ENCODE measurements at regions of chr3 and their contacts with region 1.

Region 1: GRCh38 chr3:98022978-98023820 is 11.9 kb downstream of the GABRR3 start:
- DNase-seq: peak; percentile 66
- H3K4me3 ChIP-seq: no peak overlapping the region
- H3K27ac ChIP-seq: no peak overlapping the region
- H3K4me1 ChIP-seq: no peaks in the 10 kb centered on the region
- H3K27me3 ChIP-seq: peaks cover 5 to 8% of the 10 kb centered on the region in 2 experiments
- CTCF ChIP-seq: peak; percentile 80 to 88
- POLR2A ChIP-seq: no peak

Region 2: GRCh38 chr3:96863129-96863740 is 1160.0 kb before region 1 on chr3:
- CTCF ChIA-PET with region 1: interaction called, 53 read pairs
- POLR2A ChIA-PET with region 1: no interaction called
- dilution Hi-C with region 1: no loop called
- intact Hi-C with region 1: loop called (anchors 1 kb)
- DNase-seq: peak; percentile 28
- H3K4me3 ChIP-seq: no peak overlapping the region
- H3K27ac ChIP-seq: no peak overlapping the region
- H3K4me1 ChIP-seq: no peaks in the 10 kb centered on the region
- H3K27me3 ChIP-seq: no peaks in the 10 kb centered on the region
- CTCF ChIP-seq: peak; percentile 57
- POLR2A ChIP-seq: no peak

Region 3: DNA sequence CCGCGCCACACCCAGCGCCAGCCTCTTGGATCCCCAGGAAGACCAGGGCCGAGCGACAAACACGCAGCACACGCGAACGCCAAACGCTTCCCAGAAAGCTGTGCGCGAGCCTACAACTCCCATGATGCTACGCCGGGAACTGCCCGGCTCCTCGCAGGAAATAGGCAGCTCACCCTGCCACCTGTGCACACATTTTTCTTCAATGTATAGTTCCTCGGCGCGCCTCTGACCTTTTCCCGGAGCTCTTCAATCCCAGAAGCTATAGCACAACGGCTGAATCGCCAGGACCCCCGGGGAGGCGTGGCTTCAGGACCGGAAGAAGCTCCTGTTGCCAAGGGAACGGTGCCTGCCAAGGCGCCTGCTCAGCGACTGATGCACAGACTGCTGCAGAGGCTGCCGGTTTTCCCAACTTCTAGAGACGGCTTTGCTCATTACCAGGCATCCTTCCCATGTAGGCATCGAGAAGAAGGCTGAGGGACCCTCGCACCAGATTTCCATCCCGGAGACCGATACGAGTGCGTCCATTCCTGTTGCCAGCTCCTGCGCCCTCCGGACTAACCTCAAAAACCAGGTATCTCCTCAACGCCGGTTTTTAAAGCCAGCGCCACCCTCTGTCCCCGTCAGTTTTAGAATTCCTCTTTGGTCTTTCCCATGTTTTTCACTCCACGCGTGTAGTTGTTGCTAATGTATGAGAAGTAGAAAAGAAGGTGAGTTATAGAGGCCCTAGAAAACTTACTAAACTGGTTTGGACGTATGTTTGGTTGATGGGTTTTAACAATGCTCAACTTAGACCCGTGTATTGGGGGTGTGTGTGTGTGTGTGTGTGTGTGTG is 258.6 kb before region 1 on chr3 and contains the start of gene ARL6:
- CTCF ChIA-PET with region 1: interaction called, 20 read pairs
- POLR2A ChIA-PET with region 1: no interaction called
- dilution Hi-C with region 1: no loop called
- intact Hi-C with region 1: no loop called
- DNase-seq: peak; percentile 87
- H3K4me3 ChIP-seq: peak within 1 kb of the TSS; percentile 32 to 83 (median 77)
- H3K27ac ChIP-seq: peak within 1 kb of the TSS; percentile 6
- H3K4me1 ChIP-seq: no peaks in the 10 kb centered on the region
- H3K27me3 ChIP-seq: no peaks in the 10 kb centered on the region
- CTCF ChIP-seq: no peak
- POLR2A ChIP-seq: peak; percentile 59
- total RNA-seq, gene ARL6: 5.8 and 6.1 TPM in 2 replicates

Region 4: GRCh38 chr3:97804471-97804870 is 218.7 kb before region 1 on chr3:
- CTCF ChIA-PET with region 1: interaction called, 38 read pairs
- POLR2A ChIA-PET with region 1: no interaction called
- dilution Hi-C with region 1: no loop called
- intact Hi-C with region 1: no loop called
- DNase-seq: no peak
- H3K4me3 ChIP-seq: no peak overlapping the region
- H3K27ac ChIP-seq: no peak overlapping the region
- H3K4me1 ChIP-seq: no peaks in the 10 kb centered on the region
- H3K27me3 ChIP-seq: no peaks in the 10 kb centered on the region
- CTCF ChIP-seq: no peak
- POLR2A ChIP-seq: no peak

Region 5: DNA sequence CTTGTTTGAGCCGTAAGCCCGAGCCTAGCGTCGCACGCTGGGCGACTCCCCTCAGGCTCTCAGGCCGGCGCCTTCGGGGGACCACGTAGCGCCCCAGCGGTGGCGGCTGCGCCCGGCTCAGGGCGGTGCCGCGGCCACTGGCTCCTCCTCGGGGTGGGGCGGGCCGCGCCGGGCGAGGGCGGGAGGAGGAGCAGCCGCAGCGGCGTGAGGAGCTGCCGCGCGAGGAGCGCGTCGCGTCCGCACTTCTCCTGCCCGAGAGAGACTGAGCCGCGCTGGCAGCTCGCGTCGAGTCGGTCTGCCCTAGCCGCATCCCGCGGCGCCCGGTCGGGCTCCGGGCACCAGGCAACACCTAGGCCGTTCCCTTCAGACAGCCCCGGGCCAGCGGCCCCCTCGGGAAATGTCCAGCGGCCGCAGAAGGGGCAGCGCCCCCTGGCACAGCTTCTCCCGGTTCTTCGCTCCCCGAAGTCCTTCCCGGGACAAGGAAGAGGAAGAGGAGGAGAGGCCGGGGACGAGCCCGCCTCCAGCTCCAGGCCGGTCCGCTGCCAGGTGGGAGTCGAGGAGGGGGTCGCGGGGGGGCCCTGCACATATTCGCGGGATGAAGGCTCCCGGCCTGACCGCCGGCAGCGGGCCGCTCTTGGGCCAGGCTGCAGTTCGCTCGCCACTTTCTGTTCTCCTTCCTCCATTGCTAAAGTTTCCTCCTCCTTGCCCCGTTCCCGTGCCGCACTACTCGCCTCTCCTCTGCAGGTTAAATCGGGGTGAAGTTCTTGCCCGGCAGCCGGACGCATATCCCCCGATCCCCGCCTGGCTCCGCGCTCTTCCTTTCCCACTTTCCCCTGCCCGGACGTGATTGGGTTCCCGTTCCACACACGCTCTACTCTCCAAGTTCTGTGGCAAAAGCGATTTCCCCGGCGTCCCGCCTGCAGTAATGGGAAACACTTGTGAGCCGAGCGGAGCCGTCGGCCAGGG is 201.1 kb before region 1 on chr3 and contains the start of gene CRYBG3:
- CTCF ChIA-PET with region 1: interaction called, 27 read pairs
- POLR2A ChIA-PET with region 1: no interaction called
- dilution Hi-C with region 1: no loop called
- intact Hi-C with region 1: no loop called
- DNase-seq: peak; percentile 85
- H3K4me3 ChIP-seq: peak within 1 kb of the TSS; percentile 61 to 96 (median 89)
- H3K27ac ChIP-seq: peak within 1 kb of the TSS; percentile 64
- H3K4me1 ChIP-seq: peaks cover 14% of the 10 kb centered on the region
- H3K27me3 ChIP-seq: peaks cover 0 to 2% of the 10 kb centered on the region in 2 experiments
- CTCF ChIP-seq: peak in 1 of 2 donors; percentile 47
- POLR2A ChIP-seq: peak; percentile 93
- total RNA-seq, gene CRYBG3: 15.0 and 15.9 TPM in 2 replicates

Region 6: GRCh38 chr3:97952280-97952679 is 70.9 kb before region 1 on chr3:
- CTCF ChIA-PET with region 1: interaction called, 12 read pairs
- POLR2A ChIA-PET with region 1: no interaction called
- dilution Hi-C with region 1: no loop called
- intact Hi-C with region 1: no loop called
- DNase-seq: no peak
- H3K4me3 ChIP-seq: no peak overlapping the region
- H3K27ac ChIP-seq: no peak overlapping the region
- H3K4me1 ChIP-seq: no peaks in the 10 kb centered on the region
- H3K27me3 ChIP-seq: no peaks in the 10 kb centered on the region
- CTCF ChIP-seq: no peak
- POLR2A ChIP-seq: no peak

Region 7: DNA sequence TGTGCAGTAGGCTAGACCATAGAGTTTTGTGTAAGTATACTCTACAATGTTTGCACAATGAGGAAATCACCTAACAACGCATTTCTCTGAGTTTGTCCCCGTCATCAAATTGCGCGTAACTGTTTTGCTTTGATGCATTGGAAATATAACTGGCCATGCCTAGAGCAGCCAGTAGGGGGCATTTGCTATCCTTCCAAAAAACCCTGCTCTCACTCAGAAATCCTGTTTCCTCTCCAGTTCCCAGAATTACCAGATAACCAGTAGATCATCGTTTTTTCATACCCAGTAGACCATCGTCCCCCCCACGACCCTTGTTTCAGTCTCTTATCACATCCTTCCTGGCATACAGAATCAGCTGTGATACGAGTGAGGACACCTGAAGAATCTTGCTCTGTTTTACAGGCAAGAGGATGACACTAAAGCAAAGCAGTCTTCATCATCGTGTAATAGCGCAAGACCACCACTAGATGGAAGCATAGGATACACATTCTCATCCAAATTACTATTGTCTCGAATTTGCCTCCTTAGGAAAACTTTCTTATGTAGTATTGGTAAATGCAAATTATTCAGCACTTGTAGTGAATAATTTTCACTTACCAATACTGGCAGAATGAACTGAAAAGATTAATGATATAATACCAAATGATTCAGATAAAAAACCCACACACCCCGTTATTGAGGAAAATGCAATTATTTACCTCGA is 16.3 kb after region 1 on chr3:
- CTCF ChIA-PET with region 1: interaction called, 11 read pairs
- POLR2A ChIA-PET with region 1: no interaction called
- dilution Hi-C with region 1: no loop called
- intact Hi-C with region 1: no loop called
- DNase-seq: peak; percentile 87
- H3K4me3 ChIP-seq: peak overlapping the region in 2 of 3 experiments; percentile 19 to 56
- H3K27ac ChIP-seq: no peak overlapping the region
- H3K4me1 ChIP-seq: no peaks in the 10 kb centered on the region
- H3K27me3 ChIP-seq: peaks cover 9 to 14% of the 10 kb centered on the region in 2 experiments
- CTCF ChIP-seq: peak; percentile 76 to 84
- POLR2A ChIP-seq: no peak

Region 8: DNA sequence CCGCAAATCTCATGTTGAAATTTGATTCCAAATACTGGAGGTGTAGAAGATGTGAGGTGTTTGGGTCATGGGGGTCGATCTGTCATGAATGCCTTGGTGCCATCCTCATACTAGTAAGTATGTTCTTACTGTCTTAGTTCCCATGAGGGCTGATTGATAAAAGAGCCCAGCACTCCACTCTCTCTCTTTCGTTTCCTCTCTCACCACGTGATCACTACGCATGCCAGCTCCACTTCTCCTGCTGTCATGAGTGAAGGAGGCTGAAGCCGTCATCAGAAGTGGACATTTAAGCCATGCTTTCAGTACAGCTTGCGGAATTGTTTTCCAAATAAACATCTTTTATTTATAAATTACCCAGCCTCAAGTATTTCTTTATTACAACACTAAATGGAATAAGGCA is 149.4 kb after region 1 on chr3:
- CTCF ChIA-PET with region 1: no interaction called
- POLR2A ChIA-PET with region 1: no interaction called
- dilution Hi-C with region 1: no loop called
- intact Hi-C with region 1: no loop called
- DNase-seq: no peak
- H3K4me3 ChIP-seq: no peak overlapping the region
- H3K27ac ChIP-seq: no peak overlapping the region
- H3K4me1 ChIP-seq: no peaks in the 10 kb centered on the region
- H3K27me3 ChIP-seq: no peaks in the 10 kb centered on the region
- CTCF ChIP-seq: no peak
- POLR2A ChIP-seq: no peak

Measured in endothelial cell of umbilical vein (primary cell).